Motor neuron (in vitro differentiated cells): ENCODE measurements at regions of chr12 and their contacts with region 1.

Region 1: GRCh38 chr12:91326058-91327027 is 143.7 kb upstream of the DCN start:
- ATAC-seq: peak in 4 of 8 experiments; percentile 37 to 59 (median 50)
- H3K4me3 ChIP-seq: no peak overlapping the region
- H3K27ac ChIP-seq: no peak overlapping the region
- H3K4me1 ChIP-seq: no peaks in the 10 kb centered on the region

Region 2: GRCh38 chr12:90262251-90262650 is 1064.1 kb before region 1 on chr12:
- in situ Hi-C with region 1: no loop called
- ATAC-seq: peak in 2 of 8 experiments; percentile 25 to 49
- H3K4me3 ChIP-seq: no peak overlapping the region
- H3K27ac ChIP-seq: no peak overlapping the region
- H3K4me1 ChIP-seq: no peaks in the 10 kb centered on the region

Region 3: GRCh38 chr12:90978117-90978770 is 348.1 kb before region 1 on chr12:
- in situ Hi-C with region 1: loop called in 4 of 9 experiments (anchors 25 kb)
- ATAC-seq: peak in 6 of 8 experiments; percentile 52 to 93 (median 84)
- H3K4me3 ChIP-seq: no peak overlapping the region
- H3K27ac ChIP-seq: no peak overlapping the region
- H3K4me1 ChIP-seq: no peaks in the 10 kb centered on the region

Region 4: GRCh38 chr12:91172096-91172495 is 154.2 kb before region 1 on chr12:
- in situ Hi-C with region 1: loop called in 3 of 9 experiments (anchors 10 to 25 kb)
- ATAC-seq: no peak
- H3K4me3 ChIP-seq: no peak overlapping the region
- H3K27ac ChIP-seq: no peak overlapping the region
- H3K4me1 ChIP-seq: no peaks in the 10 kb centered on the region

Region 5: GRCh38 chr12:91178139-91178561 is 148.2 kb before region 1 on chr12:
- in situ Hi-C with region 1: loop called in 3 of 9 experiments (anchors 10 to 25 kb)
- ATAC-seq: peak in 4 of 8 experiments; percentile 39 to 64 (median 45)
- H3K4me3 ChIP-seq: no peak overlapping the region
- H3K27ac ChIP-seq: no peak overlapping the region
- H3K4me1 ChIP-seq: no peaks in the 10 kb centered on the region

Region 6: DNA sequence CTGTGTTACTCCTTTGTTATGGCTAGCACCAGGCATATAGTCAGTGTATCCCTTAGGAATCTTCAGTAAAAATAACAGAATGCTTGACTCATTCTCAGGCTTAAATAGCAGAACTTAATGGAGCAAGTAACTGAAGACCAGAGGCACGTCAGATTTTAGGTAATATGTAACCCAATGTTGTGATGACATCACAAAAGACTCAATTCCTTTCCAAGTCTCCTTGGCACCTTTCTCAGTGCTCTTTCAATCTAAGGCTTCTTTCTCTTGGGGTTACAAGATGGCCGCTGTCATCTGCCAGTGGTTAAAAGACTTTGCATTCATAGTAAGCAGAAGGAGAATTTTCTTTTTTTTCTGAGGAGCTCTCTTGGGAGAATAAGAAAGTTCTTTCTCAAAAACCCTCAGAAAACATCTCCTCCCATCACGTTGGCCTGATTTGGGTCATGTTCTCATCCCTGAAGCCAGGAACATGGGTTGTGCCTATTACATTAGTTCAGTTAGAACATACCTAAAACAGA is 110.3 kb before region 1 on chr12:
- in situ Hi-C with region 1: no loop called
- ATAC-seq: no peak
- H3K4me3 ChIP-seq: no peak overlapping the region
- H3K27ac ChIP-seq: no peak overlapping the region
- H3K4me1 ChIP-seq: no peaks in the 10 kb centered on the region